ENCODE measurements at regions of chr6 and their contacts with region 1.

Region 1: DNA sequence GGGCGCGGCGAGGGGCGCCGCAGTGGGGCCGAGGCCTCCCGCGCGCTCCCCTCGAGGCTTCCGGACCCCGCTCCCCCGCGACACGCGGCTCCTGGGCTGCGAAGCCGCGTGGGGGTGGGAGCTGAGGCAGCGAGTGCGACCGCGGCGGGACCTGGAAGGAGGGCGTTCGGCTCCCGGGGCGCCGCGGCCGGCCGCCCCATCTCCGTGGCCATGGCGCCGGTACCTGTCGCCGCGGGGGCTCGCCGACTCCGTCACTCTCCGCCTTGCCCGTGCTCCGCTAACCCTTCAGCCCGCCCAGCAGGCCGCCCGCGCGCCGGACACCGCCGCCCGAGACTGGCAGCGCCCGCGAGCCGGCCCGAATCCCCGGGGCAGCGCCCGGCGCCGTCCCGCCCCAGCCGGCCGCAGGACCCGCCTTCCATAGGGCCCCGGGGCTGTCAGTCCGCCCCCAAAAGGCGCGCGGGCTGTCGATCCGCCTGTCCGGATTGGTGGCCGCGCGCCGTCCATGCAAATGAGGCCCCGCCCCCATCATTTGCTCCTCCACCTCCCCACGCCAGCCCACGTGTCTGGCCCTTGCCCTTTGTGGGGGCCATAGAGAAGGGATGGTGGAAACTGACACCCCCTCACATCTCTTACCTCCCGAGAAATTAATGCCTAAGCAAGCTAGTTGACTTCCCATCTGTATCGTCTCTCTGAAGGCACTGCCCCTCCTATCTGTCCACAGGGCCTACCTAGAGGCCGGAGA is at the start of gene FKBP5:
- DNase-seq: peak; percentile 97 to 99 (median 98)
- ATAC-seq: peak; percentile 95 to 96
- H3K4me3 ChIP-seq: peak within 1 kb of the TSS; percentile 86
- H3K27ac ChIP-seq: peak within 1 kb of the TSS; percentile 99
- H3K4me1 ChIP-seq: peaks cover 14% of the 10 kb centered on the region
- H3K27me3 ChIP-seq: no peaks in the 10 kb centered on the region
- total RNA-seq, gene FKBP5: 109 to 155 (median 111) TPM

Region 2: GRCh38 chr6:35468181-35468979 is 220.4 kb before region 1 on chr6 and contains the start of gene RPL10A:
- intact Hi-C with region 1: no loop called
- DNase-seq: peak; percentile 95 to 97 (median 96)
- ATAC-seq: peak; percentile 90 to 91
- H3K4me3 ChIP-seq: peak within 1 kb of the TSS; percentile 48
- H3K27ac ChIP-seq: peak within 1 kb of the TSS; percentile 82
- H3K4me1 ChIP-seq: peaks cover 4% of the 10 kb centered on the region
- H3K27me3 ChIP-seq: no peaks in the 10 kb centered on the region
- total RNA-seq, gene RPL10A: 608 to 717 (median 617) TPM

Region 3: GRCh38 chr6:35601331-35602132 is 87.2 kb before region 1 on chr6:
- intact Hi-C with region 1: loop called in 1 of 4 experiments (anchors 10 kb)
- DNase-seq: peak in 2 of 3 donors; percentile 53 to 72
- ATAC-seq: peak; percentile 88 to 92
- H3K4me3 ChIP-seq: peak overlapping the region; percentile 12
- H3K27ac ChIP-seq: peak overlapping the region; percentile 100
- H3K4me1 ChIP-seq: peaks cover 23% of the 10 kb centered on the region
- H3K27me3 ChIP-seq: no peaks in the 10 kb centered on the region

Region 4: DNA sequence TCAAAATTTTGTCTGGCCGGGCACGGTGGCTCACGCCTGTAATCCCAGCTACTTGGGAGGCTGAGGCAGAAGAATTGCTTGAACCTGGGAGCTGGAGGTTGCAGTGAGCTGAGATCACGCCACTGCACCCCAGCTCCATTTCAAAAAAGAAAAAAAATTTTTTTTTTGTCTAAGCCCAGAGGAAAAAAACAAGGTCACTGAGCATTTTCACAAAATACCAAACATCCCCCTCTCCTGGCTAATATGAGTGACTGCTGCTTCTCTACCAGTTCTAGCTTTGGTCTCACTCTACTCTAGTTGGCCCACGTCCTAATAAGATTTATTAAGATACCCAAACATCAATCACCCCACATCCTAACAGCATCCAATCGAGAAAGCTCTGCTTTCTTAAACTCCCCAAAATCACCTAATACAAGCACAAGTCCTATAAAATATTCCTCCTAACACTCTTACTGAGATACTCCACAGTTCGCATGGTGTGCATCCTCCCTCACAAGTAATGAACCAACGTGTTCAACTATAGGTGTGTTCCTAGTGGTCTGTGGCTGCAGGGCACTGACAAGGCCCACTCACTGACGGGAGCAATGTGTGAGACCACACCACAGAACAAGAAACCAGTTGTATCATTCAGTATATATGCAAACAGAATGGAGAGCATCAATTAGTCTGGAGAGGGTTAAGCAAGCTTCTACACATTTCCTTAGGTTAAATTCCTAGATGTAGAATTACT is 64.2 kb before region 1 on chr6:
- intact Hi-C with region 1: no loop called
- DNase-seq: no peak
- ATAC-seq: peak in 1 of 2 donors; percentile 33
- H3K4me3 ChIP-seq: no peak overlapping the region
- H3K27ac ChIP-seq: no peak overlapping the region
- H3K4me1 ChIP-seq: peaks cover 3% of the 10 kb centered on the region
- H3K27me3 ChIP-seq: no peaks in the 10 kb centered on the region

Region 5: DNA sequence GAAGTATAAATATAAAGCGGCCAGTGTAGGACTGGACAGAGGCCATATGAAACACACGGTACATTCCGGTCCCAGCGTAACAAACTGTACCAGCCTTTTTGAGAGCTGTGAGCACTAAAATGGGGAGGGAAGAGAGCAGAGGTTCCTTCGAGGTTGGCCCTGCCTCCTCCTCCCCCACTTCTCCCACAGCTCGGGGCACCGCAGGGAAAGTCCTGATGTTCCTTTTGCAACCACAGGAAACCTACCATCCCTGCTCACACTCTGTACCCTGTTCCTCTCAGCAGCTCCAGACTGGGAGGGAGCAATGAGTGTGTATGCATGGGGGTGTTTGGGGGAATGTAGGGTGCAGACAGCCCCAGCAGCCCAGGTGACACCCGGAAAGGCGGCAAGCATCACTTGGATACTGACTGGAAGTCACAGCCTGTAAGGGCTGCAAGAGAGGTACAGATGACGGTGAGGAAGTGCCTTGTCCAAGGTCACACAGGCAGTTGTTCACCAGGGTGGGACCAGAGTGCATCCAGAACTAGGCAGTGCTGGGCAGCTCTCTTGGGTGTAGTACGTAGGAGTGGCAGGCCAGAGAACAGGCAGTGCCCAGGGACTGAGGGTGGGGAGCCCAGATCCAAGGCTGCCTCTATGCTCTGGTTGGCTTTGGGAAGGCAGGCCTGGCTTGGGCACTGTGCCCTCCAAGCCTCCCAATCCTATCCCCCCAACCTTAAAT is 37.1 kb after region 1 on chr6:
- intact Hi-C with region 1: loop called (anchors 2 to 5 kb)
- DNase-seq: peak; percentile 71 to 88 (median 76)
- ATAC-seq: peak; percentile 40 to 43
- H3K4me3 ChIP-seq: no peak overlapping the region
- H3K27ac ChIP-seq: peak overlapping the region; percentile 97
- H3K4me1 ChIP-seq: peaks cover 48% of the 10 kb centered on the region
- H3K27me3 ChIP-seq: no peaks in the 10 kb centered on the region

Region 6: DNA sequence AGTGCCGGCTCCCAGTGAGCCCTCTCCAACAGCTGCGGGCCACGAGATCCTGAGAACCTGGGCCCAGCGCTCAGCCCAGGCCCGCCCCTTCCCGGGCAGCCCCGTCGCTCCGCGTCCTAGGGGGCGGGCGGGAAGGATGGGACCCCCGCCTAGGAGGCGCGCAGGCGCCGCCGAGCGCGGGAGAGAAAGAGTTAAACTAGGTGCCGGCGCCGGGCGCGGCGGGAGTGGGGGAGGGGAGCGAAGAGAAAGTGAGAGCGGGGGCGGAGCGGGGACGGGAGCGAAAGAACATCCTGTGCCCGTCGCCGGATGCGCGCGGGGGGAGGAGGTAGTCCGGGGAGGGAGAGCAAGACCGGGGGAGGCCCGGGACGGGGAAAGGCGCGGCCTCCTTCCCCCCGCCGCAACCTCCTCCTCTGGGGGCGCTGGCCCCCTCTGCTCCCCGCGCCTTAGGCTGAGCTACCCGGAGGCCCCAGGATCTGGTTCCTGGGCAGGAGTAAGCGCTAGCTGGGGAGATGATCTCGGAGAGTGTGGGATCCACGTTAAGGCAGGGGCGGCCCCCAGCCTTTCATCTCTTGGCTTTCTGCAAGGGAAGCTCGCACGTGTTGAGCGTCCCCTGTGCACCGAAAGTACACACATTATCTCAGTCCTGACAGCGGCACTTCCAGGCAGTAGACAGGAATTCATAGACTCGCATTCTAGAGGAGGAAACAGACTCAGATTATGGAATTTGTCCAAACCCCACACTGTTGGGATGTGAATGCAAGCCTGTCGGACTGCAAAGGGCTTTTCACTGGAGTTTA is 43.2 kb after region 1 on chr6:
- intact Hi-C with region 1: loop called (anchors 2 to 5 kb)
- DNase-seq: peak; percentile 98 to 99 (median 98)
- ATAC-seq: peak; percentile 79 to 81
- H3K4me3 ChIP-seq: peak overlapping the region; percentile 67
- H3K27ac ChIP-seq: peak overlapping the region; percentile 100
- H3K4me1 ChIP-seq: peaks cover 27% of the 10 kb centered on the region
- H3K27me3 ChIP-seq: no peaks in the 10 kb centered on the region

Region 7: GRCh38 chr6:35786810-35787209 is 98.1 kb after region 1 on chr6:
- intact Hi-C with region 1: no loop called
- DNase-seq: no peak
- ATAC-seq: peak; percentile 27 to 50
- H3K4me3 ChIP-seq: no peak overlapping the region
- H3K27ac ChIP-seq: no peak overlapping the region
- H3K4me1 ChIP-seq: no peaks in the 10 kb centered on the region
- H3K27me3 ChIP-seq: no peaks in the 10 kb centered on the region

Measured in right cardiac atrium (tissue), 5 donors.